Activated CD8-positive, alpha-beta T cell treated with anti-CD3 and anti-CD28 coated beads for 36 hours (primary cell): ENCODE measurements at regions of chr20 and their contacts with region 1.

Region 1: DNA sequence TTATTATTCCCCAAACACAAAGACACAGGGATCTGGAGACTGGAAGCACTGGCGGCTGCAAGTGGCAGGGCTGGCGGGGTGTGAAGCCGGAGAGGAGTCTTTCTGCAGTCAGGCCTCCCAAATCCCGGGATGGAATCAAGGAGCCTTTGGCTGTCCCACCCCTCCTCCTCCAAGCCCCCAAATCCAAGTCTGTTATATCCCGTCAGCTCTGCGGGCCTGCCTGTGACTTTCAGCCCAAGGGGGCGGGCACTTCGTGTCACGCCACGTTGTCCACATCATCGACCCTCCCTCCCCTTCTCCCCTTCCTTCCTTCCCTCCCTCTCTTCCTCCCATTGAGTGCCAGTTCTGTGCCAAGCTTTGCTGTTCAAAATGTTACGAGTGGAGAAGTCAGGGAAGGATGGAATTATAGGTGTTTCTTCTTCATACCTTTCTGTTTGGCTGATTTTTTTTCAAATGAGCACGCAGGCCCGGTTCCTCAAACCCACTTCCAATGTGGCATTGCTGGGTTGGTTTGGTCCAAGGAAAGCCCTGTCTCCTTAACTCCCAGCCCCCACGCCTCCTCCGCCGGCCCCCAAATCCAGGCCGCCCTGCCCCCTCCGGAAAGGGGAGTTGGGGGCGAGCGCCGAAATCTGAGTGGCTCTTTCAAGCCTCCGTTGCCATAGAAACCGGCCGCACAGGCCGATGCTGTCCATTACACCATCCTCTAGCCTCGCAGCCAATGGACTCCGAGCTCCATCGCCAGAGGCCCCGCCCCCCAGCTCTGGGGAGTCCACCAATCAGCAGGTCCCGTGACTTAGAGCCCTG is 12.7 kb downstream of the ZCCHC3 start:
- DNase-seq: peak; percentile 94
- ATAC-seq: peak; percentile 100
- H3K4me3 Mint-ChIP-seq: peak overlapping the region; percentile 66
- H3K27ac Mint-ChIP-seq: peak overlapping the region; percentile 40
- H3K4me1 Mint-ChIP-seq: peaks cover 15% of the 10 kb centered on the region
- H3K27me3 Mint-ChIP-seq: no peaks in the 10 kb centered on the region
- CTCF ChIP-seq: no peak

Region 2: GRCh38 chr20:297098-297924 is 12.7 kb before region 1 on chr20 and contains the start of gene ZCCHC3:
- CTCF ChIA-PET with region 1: interaction called, 9 read pairs
- POLR2A ChIA-PET with region 1: interaction called, 13 read pairs
- intact Hi-C with region 1: no loop called
- DNase-seq: peak; percentile 90
- ATAC-seq: peak; percentile 86
- H3K4me3 Mint-ChIP-seq: peak within 1 kb of the TSS; percentile 99
- H3K27ac Mint-ChIP-seq: peak within 1 kb of the TSS; percentile 98
- H3K4me1 Mint-ChIP-seq: peaks cover 41% of the 10 kb centered on the region
- H3K27me3 Mint-ChIP-seq: no peaks in the 10 kb centered on the region
- CTCF ChIP-seq: no peak
- total RNA-seq, gene ZCCHC3: 17.8 to 18.0 TPM

Region 3: GRCh38 chr20:324177-325044 is 14.4 kb after region 1 on chr20:
- CTCF ChIA-PET with region 1: interaction called, 16 read pairs
- POLR2A ChIA-PET with region 1: interaction called, 12 read pairs
- intact Hi-C with region 1: no loop called
- DNase-seq: peak; percentile 92
- ATAC-seq: peak; percentile 55
- H3K4me3 Mint-ChIP-seq: peak overlapping the region; percentile 90
- H3K27ac Mint-ChIP-seq: peak overlapping the region; percentile 91
- H3K4me1 Mint-ChIP-seq: peaks cover 24% of the 10 kb centered on the region
- H3K27me3 Mint-ChIP-seq: no peaks in the 10 kb centered on the region
- CTCF ChIP-seq: peak; percentile 20